Activated naive CD8-positive, alpha-beta T cell treated with anti-CD3 and anti-CD28 coated beads, Interleukin-2, amount 10 ng/mL, durations not matched to agents 7 days and 5 days (primary cell): ENCODE measurements at regions of chr5 and their contacts with region 1.

Region 1: GRCh38 chr5:90529194-90529938 is at the start of gene LYSMD3:
- DNase-seq: peak; percentile 95
- ATAC-seq: peak; percentile 95
- H3K4me3 Mint-ChIP-seq: peak within 1 kb of the TSS; percentile 99
- H3K27ac Mint-ChIP-seq: peak within 1 kb of the TSS; percentile 97
- H3K4me1 Mint-ChIP-seq: peaks cover 17% of the 10 kb centered on the region
- H3K27me3 Mint-ChIP-seq: peaks cover 15% of the 10 kb centered on the region
- total RNA-seq, gene LYSMD3: 21.3 to 22.0 TPM

Region 2: DNA sequence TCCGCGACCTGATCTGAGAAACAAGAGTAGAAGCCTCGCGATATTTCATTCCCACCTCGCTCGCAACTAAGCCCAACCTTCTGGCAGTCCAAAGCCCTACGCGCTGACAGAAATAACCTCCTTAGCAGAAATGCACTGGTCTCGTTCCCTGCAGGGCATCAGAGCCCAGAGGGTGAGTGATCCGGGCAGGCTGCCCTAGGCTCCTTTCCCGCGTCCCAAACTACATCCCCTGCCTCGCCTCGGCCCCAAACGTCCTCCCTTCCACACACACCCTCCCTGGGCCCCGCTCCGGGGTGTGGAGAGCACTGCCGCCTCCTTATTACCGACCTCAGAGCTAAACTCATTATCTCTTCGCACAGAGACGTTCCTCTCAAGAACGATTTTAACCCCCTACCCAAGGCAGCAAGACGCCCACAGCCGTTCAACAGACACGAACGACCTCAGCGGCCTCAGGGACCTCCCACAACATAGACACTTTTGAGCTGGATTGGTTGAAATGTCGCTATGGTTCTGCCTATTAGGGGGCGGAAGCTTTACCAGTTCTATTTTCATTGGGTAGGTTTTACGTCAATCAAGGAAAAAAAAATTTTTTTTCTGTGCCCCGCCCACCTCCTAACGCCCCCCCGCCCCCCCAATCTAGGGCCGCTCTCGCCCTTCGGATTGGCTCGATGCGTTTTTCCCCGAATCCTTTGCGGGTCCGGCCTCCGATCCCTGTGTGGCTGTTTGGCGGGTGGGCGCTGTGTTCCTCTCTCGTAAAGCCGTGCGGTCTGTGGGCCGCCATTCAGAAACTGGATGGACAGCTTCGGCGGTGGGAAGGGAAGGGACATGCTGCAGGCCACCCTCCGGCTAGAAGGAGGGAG is 119.8 kb before region 1 on chr5 and contains the start of gene CETN3:
- POLR2A ChIA-PET with region 1: interaction called, 21 read pairs
- DNase-seq: peak; percentile 85
- ATAC-seq: peak; percentile 94
- H3K4me3 Mint-ChIP-seq: no peak within 1 kb of the TSS
- H3K27ac Mint-ChIP-seq: no peak within 1 kb of the TSS
- H3K4me1 Mint-ChIP-seq: peaks cover 13% of the 10 kb centered on the region
- H3K27me3 Mint-ChIP-seq: no peaks in the 10 kb centered on the region
- total RNA-seq, gene CETN3: 24.3 to 28.7 TPM

Region 3: GRCh38 chr5:90474235-90475109 is 54.9 kb before region 1 on chr5 and contains the starts of genes MBLAC2 and POLR3G:
- POLR2A ChIA-PET with region 1: interaction called, 14 read pairs
- DNase-seq: peak; percentile 90
- ATAC-seq: peak; percentile 86
- H3K4me3 Mint-ChIP-seq: peak within 1 kb of the TSS; percentile 98
- H3K27ac Mint-ChIP-seq: peak within 1 kb of the TSS; percentile 96
- H3K4me1 Mint-ChIP-seq: peaks cover 31% of the 10 kb centered on the region
- H3K27me3 Mint-ChIP-seq: no peaks in the 10 kb centered on the region
- total RNA-seq, gene MBLAC2: 7.4 to 8.3 TPM
- total RNA-seq, gene POLR3G: 2.8 to 3.7 TPM